ENCODE measurements at regions of chr7 and their contacts with region 1.

Region 1: GRCh38 chr7:96316962-96317361 is 4.9 kb downstream of the SLC25A13 start:
- DNase-seq: no peak

Region 2: DNA sequence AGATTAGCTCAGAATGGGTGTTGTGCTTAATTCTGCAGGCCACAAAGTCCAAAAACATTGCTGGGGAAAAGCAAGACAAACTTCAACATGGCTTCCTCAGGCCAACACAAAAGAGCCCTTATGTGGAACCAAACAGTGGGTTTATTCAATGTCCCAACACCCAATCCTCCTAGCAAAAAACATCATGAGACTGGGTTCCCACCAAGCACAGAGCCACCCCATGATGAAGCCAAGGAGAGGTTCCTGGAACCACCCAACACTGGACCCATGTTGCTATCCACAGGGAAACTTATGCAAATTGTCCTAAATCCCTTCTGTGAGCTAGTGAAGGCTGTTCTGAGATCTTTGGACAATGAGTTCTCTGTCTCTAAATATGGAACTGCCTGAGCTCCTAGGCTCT is 19.1 kb before region 1 on chr7:
- CTCF ChIA-PET with region 1: no interaction called
- POLR2A ChIA-PET with region 1: no interaction called
- DNase-seq: no peak

Region 3: DNA sequence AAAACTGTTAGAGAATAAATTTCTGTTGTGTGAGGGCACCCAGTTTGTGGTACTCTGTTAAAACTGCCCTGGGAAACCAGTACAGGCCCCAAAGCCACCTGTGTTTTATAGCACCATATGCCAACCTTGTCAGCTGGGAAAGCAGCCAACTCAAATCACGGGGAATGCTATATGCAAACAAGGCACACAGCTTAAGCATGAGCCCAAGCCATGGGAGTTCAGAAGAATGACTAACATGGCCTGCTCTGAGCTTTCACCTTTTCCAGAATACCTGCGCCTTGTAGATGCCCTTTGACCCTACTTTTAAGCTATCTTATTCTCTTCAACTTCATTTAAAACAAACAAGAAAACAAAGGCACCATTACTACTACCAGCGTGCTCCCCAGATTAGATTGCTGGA is 10.5 kb after region 1 on chr7:
- CTCF ChIA-PET with region 1: no interaction called
- POLR2A ChIA-PET with region 1: no interaction called
- DNase-seq: no peak

Region 4: DNA sequence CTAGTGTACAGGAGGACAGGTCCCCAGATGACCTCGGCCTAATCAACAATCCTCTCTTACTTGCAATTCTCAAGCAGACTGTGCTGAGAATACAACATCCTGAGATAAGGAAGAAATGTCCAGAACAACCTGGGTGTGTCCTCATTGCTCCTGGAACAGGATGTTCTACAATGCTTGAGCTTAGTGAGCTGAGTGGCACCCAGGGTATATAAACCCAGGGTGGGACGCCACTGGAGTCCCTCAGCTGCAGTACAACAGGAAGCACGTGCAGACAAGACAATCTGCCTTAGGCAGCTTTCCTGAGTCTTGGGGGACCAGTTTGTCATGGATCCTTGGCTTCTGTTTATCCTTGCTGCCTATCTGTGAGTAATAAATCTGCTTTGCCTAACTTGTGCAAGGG is 32.6 kb after region 1 on chr7:
- CTCF ChIA-PET with region 1: no interaction called
- POLR2A ChIA-PET with region 1: no interaction called
- DNase-seq: no peak

Region 5: DNA sequence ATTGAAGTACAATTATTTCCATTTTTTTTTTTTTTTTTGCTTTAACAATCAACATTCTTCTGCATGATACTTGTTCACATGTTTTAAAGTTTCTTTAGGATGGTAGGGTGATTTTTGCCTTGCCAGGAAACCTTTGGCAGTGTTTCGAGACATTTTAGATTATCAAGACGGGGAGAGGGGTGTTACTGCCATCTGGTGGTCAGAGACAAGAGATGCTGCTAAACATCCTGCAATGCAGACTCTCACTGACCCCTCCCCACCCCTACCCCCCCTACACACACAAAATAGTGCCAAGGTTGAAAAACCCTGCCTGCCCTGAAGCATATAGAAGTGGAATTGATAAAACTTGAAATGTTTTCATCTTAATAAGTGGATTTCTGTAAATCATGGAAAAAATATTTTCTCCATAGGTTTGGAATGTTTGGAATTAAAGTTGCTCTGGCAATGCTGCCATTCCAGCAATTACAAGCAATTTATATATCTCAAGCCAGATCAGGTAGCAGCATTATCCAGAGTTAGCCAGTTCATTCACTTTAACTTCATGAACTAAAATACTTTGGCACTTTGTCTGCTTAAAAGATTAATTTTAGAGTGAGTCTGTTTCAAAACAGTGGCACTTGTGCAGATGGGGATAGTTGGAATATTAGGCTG is 862.6 kb after region 1 on chr7:
- CTCF ChIA-PET with region 1: interaction called, 16 read pairs
- POLR2A ChIA-PET with region 1: no interaction called
- DNase-seq: peak; percentile 59

Measured in HEK293T (cell line).